ENCODE measurements at regions of chr1 and their contacts with region 1.

Region 1: GRCh38 chr1:27044613-27045151 is 32.0 kb upstream of the TENT5B start:
- DNase-seq: peak; percentile 74
- ATAC-seq: peak; percentile 92
- H3K4me3 ChIP-seq: peak overlapping the region in 1 of 2 experiments; percentile 34; a peak in 2 of 4 replicates
- H3K27ac ChIP-seq: peak overlapping the region; percentile 34; the same call in 1 of the 2 replicates
- H3K4me1 ChIP-seq: peaks cover 5% of the 10 kb centered on the region; the same call in 1 of the 2 replicates
- H3K27me3 ChIP-seq: no peaks in the 10 kb centered on the region
- CTCF ChIP-seq: peak; percentile 95

Region 2: DNA sequence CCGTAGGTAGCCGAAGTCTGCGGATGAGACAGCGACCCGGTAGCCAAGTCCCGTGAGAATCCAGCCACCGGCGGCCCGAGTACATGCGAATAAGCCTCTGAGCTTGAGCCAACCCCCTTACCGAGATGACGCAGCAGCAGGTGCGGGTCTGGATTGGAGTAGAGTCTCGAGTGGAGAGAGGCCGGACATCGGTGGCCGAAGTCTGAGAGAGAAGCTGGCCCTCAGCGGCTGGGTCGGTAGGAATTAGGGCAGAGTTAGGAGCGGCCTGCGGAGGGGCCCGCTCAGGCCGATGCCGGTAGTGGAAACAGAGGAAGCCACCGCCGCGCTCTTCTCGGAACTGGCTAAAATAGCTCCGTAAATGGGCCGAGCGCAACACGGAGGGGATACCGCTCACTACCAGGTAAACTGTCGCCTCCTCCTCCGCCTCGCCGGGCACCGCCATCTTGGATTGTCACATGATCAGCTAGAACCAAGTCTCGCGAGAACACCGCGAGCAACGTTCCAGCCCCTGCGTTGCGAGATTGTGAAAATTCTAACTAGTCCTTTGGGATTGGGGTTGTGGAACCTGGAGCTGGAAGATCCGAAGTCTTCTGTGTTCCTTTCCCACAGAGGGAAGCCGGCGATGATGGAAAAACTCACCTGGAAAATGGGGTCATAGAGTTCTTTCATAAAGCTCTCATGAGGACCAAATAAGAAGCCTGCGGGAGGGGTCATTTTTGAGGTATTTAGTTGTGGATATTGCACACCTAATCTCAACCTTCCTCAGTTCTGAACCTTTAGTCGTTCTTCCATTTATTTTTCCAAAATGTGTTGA is 144.5 kb before region 1 on chr1 and contains the start of gene GPATCH3:
- CTCF ChIA-PET with region 1: no interaction called
- POLR2A ChIA-PET with region 1: no interaction called
- in situ Hi-C with region 1: no loop called
- intact Hi-C with region 1: no loop called
- DNase-seq: peak; percentile 82
- ATAC-seq: peak; percentile 94
- H3K4me3 ChIP-seq: peak within 1 kb of the TSS; percentile 97 to 100
- H3K27ac ChIP-seq: peak within 1 kb of the TSS; percentile 99
- H3K4me1 ChIP-seq: peaks cover 17% of the 10 kb centered on the region
- H3K27me3 ChIP-seq: no peaks in the 10 kb centered on the region
- CTCF ChIP-seq: no peak
- total RNA-seq, gene GPATCH3: 29.7 TPM

Region 3: GRCh38 chr1:26999440-26999987 is 45.2 kb before region 1 on chr1:
- CTCF ChIA-PET with region 1: interaction called, 7 read pairs
- POLR2A ChIA-PET with region 1: no interaction called
- in situ Hi-C with region 1: no loop called
- intact Hi-C with region 1: loop called (anchors 5 kb)
- DNase-seq: no peak
- ATAC-seq: peak; percentile 59
- H3K4me3 ChIP-seq: no peak overlapping the region
- H3K27ac ChIP-seq: peak overlapping the region; percentile 82
- H3K4me1 ChIP-seq: peaks cover 78% of the 10 kb centered on the region
- H3K27me3 ChIP-seq: no peaks in the 10 kb centered on the region
- CTCF ChIP-seq: no peak

Region 4: DNA sequence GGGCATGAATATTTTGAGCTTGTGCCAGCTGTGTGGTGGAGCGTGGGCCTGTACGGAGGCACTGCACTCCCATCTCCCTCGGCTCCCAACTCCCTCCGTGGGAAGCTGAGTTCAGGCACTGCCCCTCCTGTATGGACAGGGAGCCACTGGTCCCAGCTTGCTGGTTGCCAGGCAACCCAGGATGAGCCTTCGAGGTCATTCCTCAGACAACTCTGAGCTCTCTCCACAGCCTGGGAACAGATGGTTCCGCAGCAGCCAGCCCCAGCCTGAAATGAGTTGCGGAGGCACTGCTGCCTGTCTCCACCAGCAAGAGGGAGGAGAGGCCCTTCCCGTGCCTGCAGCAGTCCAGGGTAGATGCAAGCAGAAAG is 26.4 kb after region 1 on chr1:
- CTCF ChIA-PET with region 1: interaction called, 15 read pairs
- POLR2A ChIA-PET with region 1: no interaction called
- in situ Hi-C with region 1: no loop called
- intact Hi-C with region 1: no loop called
- DNase-seq: no peak
- ATAC-seq: peak; percentile 41; the same call in 1 of the 2 replicates
- H3K4me3 ChIP-seq: no peak overlapping the region
- H3K27ac ChIP-seq: no peak overlapping the region
- H3K4me1 ChIP-seq: peaks cover 4% of the 10 kb centered on the region; the same call in 1 of the 2 replicates
- H3K27me3 ChIP-seq: no peaks in the 10 kb centered on the region
- CTCF ChIP-seq: no peak

Region 5: DNA sequence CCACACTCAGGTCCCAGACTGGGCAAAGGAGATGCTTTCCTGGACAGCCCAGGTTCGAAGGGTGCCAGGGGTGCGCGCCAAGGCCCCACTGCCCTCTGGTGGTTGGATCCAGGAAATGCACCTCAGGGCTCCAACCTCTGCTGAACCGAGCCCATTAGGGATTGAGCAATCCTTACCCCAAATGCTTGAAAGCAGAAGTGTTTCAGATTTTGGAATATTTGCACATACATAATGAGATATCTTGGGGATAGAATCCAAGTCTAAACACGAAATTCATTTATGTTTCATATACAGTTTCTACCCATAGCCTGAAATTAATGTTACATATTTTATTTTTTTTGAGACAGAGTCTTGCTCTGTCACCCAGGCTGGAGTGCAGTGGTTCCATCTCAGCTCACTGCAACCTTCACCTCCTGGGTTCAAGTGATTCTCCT is 52.8 kb after region 1 on chr1:
- CTCF ChIA-PET with region 1: interaction called, 151 read pairs
- POLR2A ChIA-PET with region 1: no interaction called
- in situ Hi-C with region 1: no loop called
- intact Hi-C with region 1: loop called (anchors 1 kb)
- DNase-seq: peak; percentile 65
- ATAC-seq: peak; percentile 85
- H3K4me3 ChIP-seq: no peak overlapping the region
- H3K27ac ChIP-seq: no peak overlapping the region
- H3K4me1 ChIP-seq: peaks cover 13% of the 10 kb centered on the region
- H3K27me3 ChIP-seq: no peaks in the 10 kb centered on the region
- CTCF ChIP-seq: peak; percentile 98

Region 6: DNA sequence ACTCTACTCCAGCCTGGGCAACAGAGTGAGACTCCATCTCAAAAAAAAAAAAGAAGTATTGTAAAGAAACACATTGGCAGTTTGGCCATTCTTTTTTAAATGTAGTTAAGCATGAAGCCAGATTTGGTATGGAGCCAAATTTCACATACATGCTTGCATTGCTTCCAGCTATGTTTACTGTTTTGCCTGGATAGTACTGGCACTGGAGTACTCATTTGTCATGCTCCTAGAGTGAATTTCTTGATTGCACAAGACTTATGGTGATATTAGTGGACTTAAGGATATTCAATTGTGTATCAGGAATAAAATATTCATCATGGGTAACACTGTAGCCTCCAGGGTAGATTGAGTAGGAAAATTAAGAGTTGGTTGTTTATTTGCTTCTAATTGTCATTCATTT is 134.7 kb after region 1 on chr1:
- CTCF ChIA-PET with region 1: no interaction called
- POLR2A ChIA-PET with region 1: no interaction called
- in situ Hi-C with region 1: no loop called
- intact Hi-C with region 1: no loop called
- DNase-seq: no peak
- ATAC-seq: no peak
- H3K4me3 ChIP-seq: no peak overlapping the region
- H3K27ac ChIP-seq: no peak overlapping the region
- H3K4me1 ChIP-seq: no peaks in the 10 kb centered on the region
- H3K27me3 ChIP-seq: no peaks in the 10 kb centered on the region
- CTCF ChIP-seq: no peak

Region 7: DNA sequence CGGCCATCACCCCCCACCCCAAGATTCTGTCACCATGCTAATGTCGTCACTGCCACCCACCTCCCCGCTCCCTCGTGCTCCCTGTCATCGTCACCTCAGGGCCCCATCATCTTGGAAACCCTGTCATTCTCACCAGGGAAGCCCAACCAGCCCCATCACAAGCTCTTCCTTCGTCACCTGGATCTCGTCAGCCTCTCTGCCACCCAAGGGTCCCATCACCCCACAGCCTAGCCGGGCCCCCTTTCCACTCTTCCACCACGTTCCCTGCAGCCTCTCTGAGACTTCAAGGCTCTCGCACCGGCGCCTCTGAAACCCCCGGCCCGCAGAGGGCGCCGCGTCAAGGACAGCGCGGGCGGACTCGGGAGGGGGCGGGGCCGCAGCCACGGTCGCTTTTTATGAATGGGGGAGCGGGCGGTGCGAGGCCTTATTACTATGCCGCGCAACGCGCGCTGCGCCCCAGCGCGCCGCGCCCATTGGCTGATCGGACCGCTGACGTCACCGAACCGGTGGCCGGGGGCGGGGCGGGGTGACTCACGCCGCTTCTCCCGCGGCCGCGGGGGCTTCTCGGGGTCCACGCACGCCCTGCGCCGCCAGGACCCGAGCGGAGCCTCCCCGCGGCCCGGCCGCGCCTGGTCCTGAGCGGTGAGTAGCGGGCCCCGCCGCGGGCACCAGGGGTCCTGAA is 347.6 kb after region 1 on chr1 and contains the start of gene GPR3:
- CTCF ChIA-PET with region 1: interaction called, 10 read pairs
- POLR2A ChIA-PET with region 1: no interaction called
- in situ Hi-C with region 1: no loop called
- intact Hi-C with region 1: no loop called
- DNase-seq: no peak
- ATAC-seq: peak; percentile 96
- H3K4me3 ChIP-seq: peak within 1 kb of the TSS; percentile 65 to 71
- H3K27ac ChIP-seq: peak within 1 kb of the TSS; percentile 69
- H3K4me1 ChIP-seq: peaks cover 6% of the 10 kb centered on the region
- H3K27me3 ChIP-seq: no peaks in the 10 kb centered on the region
- CTCF ChIP-seq: peak; percentile 86
- total RNA-seq, gene GPR3: 0.95 TPM